Activated T-helper 1 cell treated with anti-CD3 and anti-CD28 coated beads, Interleukin-12 subunit alpha, Interleukin-12 subunit beta, Interleukin-2, Interleukin-4 antibody, amounts not matched to agents 30 ng/mL and 10 ng/mL and 1 ng/mL, durations not matched to agents 14 hours and 24 hours and 36 hours (primary cell): ENCODE measurements at regions of chr12 and their contacts with region 1.

Region 1: GRCh38 chr12:94149119-94149780 is 873 bp downstream of the PLXNC1 start:
- DNase-seq: peak; percentile 32
- H3K4me3 Mint-ChIP-seq: peak overlapping the region; percentile 92
- H3K27ac Mint-ChIP-seq: peak overlapping the region; percentile 55
- H3K4me1 Mint-ChIP-seq: peaks cover 44% of the 10 kb centered on the region
- H3K27me3 Mint-ChIP-seq: peaks cover 24% of the 10 kb centered on the region

Region 2: GRCh38 chr12:94262228-94263010 is 113.2 kb after region 1 on chr12:
- intact Hi-C with region 1: loop called (anchors 1 kb)
- DNase-seq: peak; percentile 56
- H3K4me3 Mint-ChIP-seq: peak overlapping the region; percentile 84
- H3K27ac Mint-ChIP-seq: peak overlapping the region; percentile 96
- H3K4me1 Mint-ChIP-seq: peaks cover 55% of the 10 kb centered on the region
- H3K27me3 Mint-ChIP-seq: no peaks in the 10 kb centered on the region

Region 3: DNA sequence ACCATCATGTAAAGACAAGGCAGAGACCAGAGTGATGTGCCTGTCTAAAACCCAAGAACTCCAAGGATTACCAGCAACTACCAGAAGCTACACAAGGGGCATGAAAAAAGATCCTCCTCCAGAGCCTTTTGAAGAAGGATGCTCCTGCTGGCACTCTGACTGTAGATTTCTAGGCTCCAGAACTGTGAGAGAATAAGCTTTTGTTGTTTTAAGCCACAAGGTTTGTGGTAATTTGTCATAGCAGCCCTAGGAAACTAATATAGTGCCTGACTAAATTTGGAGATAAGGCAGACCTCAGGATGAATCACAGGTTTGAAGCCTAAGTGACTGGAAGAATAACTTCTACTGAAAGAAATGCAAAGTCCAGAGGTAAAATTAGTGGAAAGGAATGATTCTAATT is 177.5 kb after region 1 on chr12:
- intact Hi-C with region 1: loop called (anchors 1 kb)
- DNase-seq: no peak
- H3K4me3 Mint-ChIP-seq: no peak overlapping the region
- H3K27ac Mint-ChIP-seq: peak overlapping the region; percentile 51
- H3K4me1 Mint-ChIP-seq: peaks cover 29% of the 10 kb centered on the region
- H3K27me3 Mint-ChIP-seq: no peaks in the 10 kb centered on the region

Region 4: GRCh38 chr12:94340573-94340972 is 191.3 kb after region 1 on chr12:
- intact Hi-C with region 1: no loop called
- DNase-seq: no peak
- H3K4me3 Mint-ChIP-seq: no peak overlapping the region
- H3K27ac Mint-ChIP-seq: no peak overlapping the region
- H3K4me1 Mint-ChIP-seq: no peaks in the 10 kb centered on the region
- H3K27me3 Mint-ChIP-seq: no peaks in the 10 kb centered on the region

Region 5: DNA sequence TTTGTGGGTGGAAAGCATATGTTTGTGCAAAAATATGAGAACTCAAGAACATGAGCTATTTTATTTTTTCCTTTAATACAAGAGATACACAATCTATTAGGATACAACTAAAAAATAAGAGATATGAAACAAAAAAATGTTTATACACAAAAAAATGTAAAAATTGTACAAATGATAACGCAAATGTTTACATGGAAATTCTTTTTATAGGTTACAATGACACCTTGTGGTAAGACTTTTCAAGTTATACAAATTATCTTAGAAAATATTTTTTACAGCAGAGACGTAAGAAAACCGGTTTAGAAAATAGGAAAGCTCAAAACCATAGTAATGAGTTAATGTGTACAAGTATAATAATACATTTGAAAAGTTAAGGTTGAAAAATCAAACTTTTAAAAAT is 284.9 kb after region 1 on chr12:
- intact Hi-C with region 1: loop called (anchors 1 kb)
- DNase-seq: no peak
- H3K4me3 Mint-ChIP-seq: no peak overlapping the region
- H3K27ac Mint-ChIP-seq: no peak overlapping the region
- H3K4me1 Mint-ChIP-seq: peaks cover 26% of the 10 kb centered on the region
- H3K27me3 Mint-ChIP-seq: no peaks in the 10 kb centered on the region

Region 6: DNA sequence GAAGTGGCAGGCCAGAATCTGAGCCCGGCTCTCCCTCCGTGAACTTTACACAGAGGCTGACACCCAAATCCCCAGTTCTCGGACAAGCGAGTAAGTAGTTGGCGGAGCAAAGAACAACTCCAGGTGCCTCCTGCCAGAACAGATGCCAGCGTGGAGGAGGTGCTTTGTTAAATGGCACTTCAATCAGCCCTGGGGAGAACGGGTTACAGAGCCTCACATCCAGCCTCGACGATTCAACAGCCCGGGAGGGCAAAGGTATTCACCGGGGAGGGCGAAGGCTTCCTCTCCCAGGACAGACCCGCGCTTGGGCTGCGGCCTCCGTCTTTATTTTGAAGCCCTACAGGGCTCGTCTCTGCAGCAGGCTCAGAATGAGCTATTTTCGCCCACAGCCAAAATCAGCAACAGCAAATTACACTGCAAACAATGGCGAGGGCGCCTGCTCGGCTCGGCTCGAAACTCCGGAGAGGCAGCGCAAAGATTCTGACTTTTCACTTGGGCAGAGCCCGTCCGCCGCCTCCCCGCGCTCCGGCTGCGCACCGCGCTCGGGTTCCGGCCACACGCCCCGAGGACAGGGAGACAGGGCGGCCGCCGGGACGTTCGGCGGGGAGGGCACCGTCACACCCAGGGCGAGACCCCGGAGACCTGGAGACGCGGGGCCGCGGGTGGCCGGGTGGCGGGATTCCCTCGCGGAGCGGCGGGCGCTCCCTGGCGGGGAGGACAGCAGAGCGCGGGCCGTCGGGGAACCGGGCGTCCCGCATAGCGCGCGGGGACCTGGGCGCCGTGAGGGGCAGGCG is 500.3 kb after region 1 on chr12:
- intact Hi-C with region 1: loop called (anchors 10 kb)
- DNase-seq: peak; percentile 21
- H3K4me3 Mint-ChIP-seq: peak overlapping the region; percentile 80
- H3K27ac Mint-ChIP-seq: peak overlapping the region; percentile 18
- H3K4me1 Mint-ChIP-seq: peaks cover 11% of the 10 kb centered on the region
- H3K27me3 Mint-ChIP-seq: peaks cover 73% of the 10 kb centered on the region

Region 7: GRCh38 chr12:95014554-95014953 is 865.3 kb after region 1 on chr12:
- intact Hi-C with region 1: no loop called
- DNase-seq: no peak
- H3K4me3 Mint-ChIP-seq: no peak overlapping the region
- H3K27ac Mint-ChIP-seq: no peak overlapping the region
- H3K4me1 Mint-ChIP-seq: no peaks in the 10 kb centered on the region
- H3K27me3 Mint-ChIP-seq: peaks cover 2% of the 10 kb centered on the region